Heart right ventricle (tissue), 16 donors: ENCODE measurements at regions of chr19 and their contacts with region 1.

Region 1: GRCh38 chr19:30227661-30228428 is 144.3 kb upstream of the ZNF536 start:
- DNase-seq: peak; percentile 65 to 67
- ATAC-seq: peak; percentile 60 to 83 (median 76)
- H3K4me3 ChIP-seq: peak overlapping the region; percentile 21 to 63 (median 56)
- H3K27ac ChIP-seq: peak overlapping the region in 8 of 10 donors; percentile 10 to 77 (median 57)
- H3K4me1 ChIP-seq: peaks cover 3 to 43% (median 27%) of the 10 kb centered on the region in 9 donors
- H3K27me3 ChIP-seq: peaks cover 0 to 85% (median 71%) of the 10 kb centered on the region in 7 donors
- CTCF ChIP-seq: peak; percentile 38 to 75 (median 63)

Region 2: DNA sequence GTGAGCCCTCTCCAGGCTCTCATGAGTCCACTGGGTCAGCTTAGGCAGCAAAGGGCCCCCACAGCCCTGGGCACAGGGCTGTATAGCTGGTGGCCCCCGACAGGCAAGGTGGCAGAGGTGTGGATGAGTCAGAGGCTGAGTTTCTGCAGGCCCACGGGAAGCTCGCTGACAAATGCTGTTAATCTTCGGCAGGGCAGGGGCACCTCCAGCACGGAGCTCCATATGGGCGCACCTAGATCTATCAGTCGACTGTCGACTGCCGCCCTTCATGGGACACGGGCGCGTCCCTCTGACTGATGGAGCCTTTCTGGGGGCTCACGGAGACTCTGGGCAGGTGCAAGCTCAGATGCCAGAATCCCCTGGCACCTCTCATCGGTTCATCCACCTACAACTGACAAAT is 104.7 kb before region 1 on chr19:
- intact Hi-C with region 1: no loop called
- DNase-seq: no peak
- ATAC-seq: no peak
- H3K4me3 ChIP-seq: no peak overlapping the region
- H3K27ac ChIP-seq: no peak overlapping the region
- H3K4me1 ChIP-seq: no peaks in the 10 kb centered on the region
- H3K27me3 ChIP-seq: peaks cover 0 to 35% (median 20%) of the 10 kb centered on the region in 7 donors
- CTCF ChIP-seq: no peak

Region 3: GRCh38 chr19:30406220-30407067 is 178.6 kb after region 1 on chr19:
- intact Hi-C with region 1: loop called in 6 of 10 experiments (anchors 2 to 10 kb)
- DNase-seq: peak; percentile 15 to 33
- ATAC-seq: peak in 7 of 8 donors; percentile 73 to 94 (median 88)
- H3K4me3 ChIP-seq: no peak overlapping the region
- H3K27ac ChIP-seq: no peak overlapping the region
- H3K4me1 ChIP-seq: peaks cover 0 to 8% (median 0%) of the 10 kb centered on the region in 9 donors
- H3K27me3 ChIP-seq: peaks cover 0 to 15% (median 0%) of the 10 kb centered on the region in 7 donors
- CTCF ChIP-seq: peak; percentile 10 to 61 (median 45)

Region 4: GRCh38 chr19:30419568-30420180 is 191.8 kb after region 1 on chr19:
- intact Hi-C with region 1: loop called in 1 of 10 experiments (anchors 5 kb)
- DNase-seq: no peak
- ATAC-seq: peak in 3 of 8 donors; percentile 27 to 57 (median 39)
- H3K4me3 ChIP-seq: no peak overlapping the region
- H3K27ac ChIP-seq: no peak overlapping the region
- H3K4me1 ChIP-seq: peaks cover 0 to 10% (median 0%) of the 10 kb centered on the region in 9 donors
- H3K27me3 ChIP-seq: peaks cover 0 to 28% (median 18%) of the 10 kb centered on the region in 7 donors
- CTCF ChIP-seq: no peak